WTC11 (cell line): ENCODE measurements at regions of chr1 and their contacts with region 1.

Region 1: GRCh38 chr1:43991476-43992231 is at the start of gene CCDC24:
- DNase-seq: peak; percentile 82
- ATAC-seq: peak; percentile 70
- H3K4me3 Mint-ChIP-seq: peak within 1 kb of the TSS; percentile 86
- H3K27ac Mint-ChIP-seq: peak within 1 kb of the TSS; percentile 93
- H3K4me1 Mint-ChIP-seq: peaks cover 22% of the 10 kb centered on the region
- H3K27me3 Mint-ChIP-seq: peaks cover 18% of the 10 kb centered on the region
- CTCF ChIP-seq: no peak
- total RNA-seq, gene CCDC24: 12.1 to 20.1 TPM (median 19.2 TPM) in 3 replicates

Region 2: DNA sequence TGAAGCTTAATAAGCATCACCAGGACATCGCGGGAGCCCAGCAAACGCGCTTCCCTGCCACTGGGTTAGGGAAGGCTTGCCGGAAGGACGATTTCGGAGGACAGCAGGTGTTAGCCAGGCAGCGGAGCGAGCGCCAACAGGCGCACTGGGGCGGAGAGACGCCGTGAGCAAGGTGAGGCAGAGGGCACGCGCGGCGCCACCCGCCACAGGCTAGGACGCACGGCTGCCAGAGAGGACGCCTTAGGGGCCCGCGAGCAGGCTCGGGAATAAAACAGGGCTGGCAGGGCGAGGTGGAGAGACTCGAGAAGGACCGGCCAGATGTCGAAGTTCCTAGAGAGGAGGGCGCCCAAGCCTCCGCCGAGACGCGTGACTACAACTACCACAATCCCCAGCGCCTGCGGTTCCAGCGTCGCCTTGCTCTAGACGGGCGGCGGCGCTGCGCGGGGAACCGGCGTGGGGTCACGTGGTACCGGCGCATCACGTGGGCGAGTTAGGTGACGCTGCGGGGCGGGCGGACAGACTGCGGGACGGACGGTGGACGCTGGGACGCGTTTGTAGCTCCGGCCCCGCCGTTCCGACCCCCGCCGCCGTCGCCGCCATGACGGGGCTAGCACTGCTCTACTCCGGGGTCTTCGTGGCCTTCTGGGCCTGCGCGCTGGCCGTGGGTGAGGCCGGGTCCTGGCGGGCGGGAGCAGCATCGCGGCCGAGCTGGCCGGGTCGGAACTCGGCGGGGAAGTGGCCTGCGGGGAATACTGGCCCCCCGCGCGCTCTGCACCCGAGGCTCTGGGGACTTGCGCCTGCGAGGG is 17.0 kb before region 1 on chr1 and contains the start of gene ATP6V0B:
- CTCF ChIA-PET with region 1: interaction called, 7 read pairs
- POLR2A ChIA-PET with region 1: interaction called, 13 read pairs
- DNase-seq: peak; percentile 96
- ATAC-seq: peak; percentile 70
- H3K4me3 Mint-ChIP-seq: peak within 1 kb of the TSS; percentile 89
- H3K27ac Mint-ChIP-seq: peak within 1 kb of the TSS; percentile 93
- H3K4me1 Mint-ChIP-seq: peaks cover 43% of the 10 kb centered on the region
- H3K27me3 Mint-ChIP-seq: no peaks in the 10 kb centered on the region
- CTCF ChIP-seq: no peak
- total RNA-seq, gene ATP6V0B: 108 to 115 TPM (median 110 TPM) in 3 replicates

Region 3: DNA sequence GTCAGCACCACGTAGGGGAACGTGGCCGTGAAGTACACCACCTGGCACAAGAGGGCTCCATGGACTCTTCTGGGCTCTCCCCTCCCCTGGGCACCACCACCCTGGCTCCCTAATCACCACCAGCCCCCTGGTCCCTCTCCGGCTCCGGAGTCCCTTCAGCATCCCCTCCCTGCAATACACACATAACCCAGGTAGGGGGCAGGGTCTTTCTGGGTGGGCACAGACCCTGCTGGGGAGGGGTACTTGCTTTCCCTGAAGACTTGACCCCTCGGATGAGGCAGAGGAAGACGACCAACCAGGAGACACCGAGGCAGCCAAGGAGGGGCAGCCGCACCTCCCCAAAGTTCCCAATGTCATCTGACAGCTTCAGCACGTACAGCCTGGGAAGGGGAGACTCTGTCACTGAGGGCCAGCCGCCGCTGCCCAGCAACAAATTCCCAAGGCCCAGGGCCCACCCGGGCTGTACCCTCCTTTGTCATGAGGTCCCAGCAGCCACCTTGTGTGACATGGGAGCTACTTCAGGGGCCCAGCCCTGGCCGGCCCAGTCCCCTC is 11.0 kb after region 1 on chr1:
- CTCF ChIA-PET with region 1: interaction called, 11 read pairs
- POLR2A ChIA-PET with region 1: no interaction called
- DNase-seq: peak; percentile 40
- ATAC-seq: peak; percentile 62
- H3K4me3 Mint-ChIP-seq: no peak overlapping the region
- H3K27ac Mint-ChIP-seq: no peak overlapping the region
- H3K4me1 Mint-ChIP-seq: peaks cover under 1% of the 10 kb centered on the region; the same call in 1 of the 2 replicates
- H3K27me3 Mint-ChIP-seq: no peaks in the 10 kb centered on the region; the same call in 1 of the 2 replicates
- CTCF ChIP-seq: peak; percentile 62; the same call in 1 of the 2 replicates

Region 4: DNA sequence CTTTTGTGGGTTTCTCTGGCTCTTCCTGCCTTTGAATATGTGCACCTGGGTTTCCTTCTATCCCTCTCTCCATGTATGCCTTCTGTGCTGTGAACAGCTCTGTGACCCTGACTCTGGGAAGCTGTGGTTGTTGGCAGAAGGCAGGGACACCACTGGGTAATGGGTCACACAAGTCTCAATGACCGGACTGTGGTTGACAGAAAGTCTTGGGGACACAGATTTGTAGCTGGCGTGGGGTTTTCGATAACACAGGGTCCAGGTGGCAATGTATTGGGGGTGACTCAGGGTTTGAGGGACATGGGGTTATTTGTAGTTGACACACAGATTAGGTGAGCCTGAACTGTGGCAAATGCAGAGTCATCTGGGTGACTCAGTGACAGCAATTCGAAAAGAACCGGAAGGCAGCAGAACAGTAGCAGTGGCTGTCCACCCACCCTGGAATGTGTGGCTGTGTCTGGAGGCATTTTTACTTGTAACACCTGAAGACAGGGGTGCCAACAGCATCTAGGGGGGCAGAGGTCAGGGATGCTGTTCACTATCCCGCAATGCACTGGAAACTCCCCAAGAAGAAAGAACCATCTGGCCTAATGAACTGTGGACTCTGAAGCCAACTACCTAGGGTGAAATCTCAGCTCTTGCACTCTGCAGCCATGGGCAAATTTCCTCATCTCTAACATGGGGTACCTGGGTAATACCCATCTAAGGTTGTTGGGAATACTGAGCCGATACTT is 52.6 kb after region 1 on chr1:
- CTCF ChIA-PET with region 1: interaction called, 46 read pairs
- POLR2A ChIA-PET with region 1: no interaction called
- DNase-seq: peak; percentile 2
- ATAC-seq: no peak
- H3K4me3 Mint-ChIP-seq: no peak overlapping the region
- H3K27ac Mint-ChIP-seq: no peak overlapping the region
- H3K4me1 Mint-ChIP-seq: no peaks in the 10 kb centered on the region
- H3K27me3 Mint-ChIP-seq: peaks cover 22% of the 10 kb centered on the region
- CTCF ChIP-seq: no peak